CD8-positive, alpha-beta T cell (primary cell): ENCODE measurements at regions of chrX and their contacts with region 1.

Region 1: GRCh38 chrX:19593690-19594089 is 78.4 kb upstream of the MAP3K15 start:
- DNase-seq: peak in 3 of 9 experiments; percentile 14 to 67 (median 48)
- ATAC-seq: peak; percentile 56
- H3K4me3 ChIP-seq: no peak overlapping the region
- H3K4me3 Mint-ChIP-seq: no peak overlapping the region
- H3K27ac ChIP-seq: no peak overlapping the region
- H3K27ac Mint-ChIP-seq: no peak overlapping the region
- H3K4me1 ChIP-seq: no peaks in the 10 kb centered on the region
- H3K4me1 Mint-ChIP-seq: peaks cover 15% of the 10 kb centered on the region
- H3K27me3 ChIP-seq: no peaks in the 10 kb centered on the region
- H3K27me3 Mint-ChIP-seq: no peaks in the 10 kb centered on the region
- CTCF ChIP-seq: no peak

Region 2: GRCh38 chrX:19382555-19383145 is 211.0 kb before region 1 on chrX:
- CTCF ChIA-PET with region 1: no interaction called
- POLR2A ChIA-PET with region 1: no interaction called
- intact Hi-C with region 1: no loop called
- DNase-seq: peak; percentile 7 to 66 (median 47)
- ATAC-seq: peak; percentile 63
- H3K4me3 ChIP-seq: no peak overlapping the region
- H3K4me3 Mint-ChIP-seq: no peak overlapping the region
- H3K27ac ChIP-seq: no peak overlapping the region
- H3K27ac Mint-ChIP-seq: no peak overlapping the region
- H3K4me1 ChIP-seq: no peaks in the 10 kb centered on the region
- H3K4me1 Mint-ChIP-seq: no peaks in the 10 kb centered on the region
- H3K27me3 ChIP-seq: no peaks in the 10 kb centered on the region
- H3K27me3 Mint-ChIP-seq: peaks cover 4% of the 10 kb centered on the region
- CTCF ChIP-seq: peak; percentile 35

Region 3: GRCh38 chrX:19739683-19740082 is 146.0 kb after region 1 on chrX:
- CTCF ChIA-PET with region 1: no interaction called
- POLR2A ChIA-PET with region 1: no interaction called
- intact Hi-C with region 1: loop called in 1 of 2 experiments (anchors 10 kb)
- DNase-seq: peak in 7 of 9 experiments; percentile 10 to 71 (median 54)
- ATAC-seq: peak; percentile 44
- H3K4me3 ChIP-seq: no peak overlapping the region
- H3K4me3 Mint-ChIP-seq: no peak overlapping the region
- H3K27ac ChIP-seq: no peak overlapping the region
- H3K27ac Mint-ChIP-seq: peak overlapping the region; percentile 81
- H3K4me1 ChIP-seq: peaks cover 60% of the 10 kb centered on the region
- H3K4me1 Mint-ChIP-seq: peaks cover 76% of the 10 kb centered on the region
- H3K27me3 ChIP-seq: no peaks in the 10 kb centered on the region
- H3K27me3 Mint-ChIP-seq: no peaks in the 10 kb centered on the region
- CTCF ChIP-seq: peak; percentile 52

Region 4: GRCh38 chrX:20066968-20067708 is 473.4 kb after region 1 on chrX:
- CTCF ChIA-PET with region 1: no interaction called
- POLR2A ChIA-PET with region 1: no interaction called
- intact Hi-C with region 1: loop called in 1 of 2 experiments (anchors 2 kb)
- DNase-seq: peak in 6 of 9 experiments; percentile 0 to 60 (median 16)
- ATAC-seq: peak; percentile 63
- H3K4me3 ChIP-seq: no peak overlapping the region
- H3K4me3 Mint-ChIP-seq: no peak overlapping the region
- H3K27ac ChIP-seq: no peak overlapping the region
- H3K27ac Mint-ChIP-seq: no peak overlapping the region
- H3K4me1 ChIP-seq: no peaks in the 10 kb centered on the region
- H3K4me1 Mint-ChIP-seq: no peaks in the 10 kb centered on the region
- H3K27me3 ChIP-seq: no peaks in the 10 kb centered on the region
- H3K27me3 Mint-ChIP-seq: no peaks in the 10 kb centered on the region
- CTCF ChIP-seq: peak; percentile 31

Region 5: DNA sequence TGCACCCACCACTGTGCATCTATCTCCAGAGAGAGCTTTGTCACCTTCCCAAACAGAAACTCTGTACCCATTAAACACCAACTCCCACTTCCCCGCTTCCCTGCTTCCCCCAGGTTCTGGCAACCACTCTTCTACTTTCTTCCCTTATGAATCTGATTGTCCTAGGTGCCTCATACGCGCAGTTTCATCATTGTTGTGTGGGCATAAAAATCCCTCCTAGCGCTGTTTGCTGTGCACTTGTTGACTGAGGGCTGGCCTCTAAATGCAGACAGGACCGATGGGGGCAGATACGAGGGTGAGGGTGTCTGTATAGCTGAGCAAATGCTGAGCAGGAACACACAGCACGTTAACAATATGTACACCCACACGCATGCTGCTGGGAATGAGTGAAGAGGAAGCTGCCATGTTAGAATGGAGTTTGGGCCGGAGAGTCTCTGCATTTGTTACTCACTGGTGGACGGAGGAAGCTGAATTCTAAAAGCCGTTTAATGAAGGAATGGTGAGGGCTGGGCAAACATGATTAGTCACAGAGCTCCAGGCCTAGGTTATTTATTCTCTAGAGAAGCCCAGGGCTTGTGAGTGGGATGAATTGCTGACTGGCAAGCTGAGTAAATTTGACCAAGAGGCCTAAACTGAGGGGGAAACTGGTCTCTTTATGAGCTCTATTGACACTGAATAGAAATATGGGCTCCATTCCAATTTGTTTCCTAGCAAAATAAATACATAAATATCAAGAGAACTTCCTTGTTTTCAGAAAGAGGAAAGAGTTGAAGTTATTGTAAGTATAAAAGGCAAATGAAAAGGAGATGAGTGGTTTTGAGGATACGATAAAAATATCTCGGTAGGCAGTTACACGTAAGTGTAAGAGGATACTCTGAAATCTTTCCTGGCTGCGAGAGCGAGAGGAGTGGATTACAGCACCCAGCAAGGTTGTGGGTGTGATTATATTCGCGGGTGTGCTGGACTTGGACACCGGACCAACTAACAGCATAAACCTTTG is 768.9 kb after region 1 on chrX:
- CTCF ChIA-PET with region 1: no interaction called
- POLR2A ChIA-PET with region 1: no interaction called
- intact Hi-C with region 1: no loop called
- DNase-seq: no peak
- ATAC-seq: no peak
- H3K4me3 ChIP-seq: no peak overlapping the region
- H3K4me3 Mint-ChIP-seq: no peak overlapping the region
- H3K27ac ChIP-seq: no peak overlapping the region
- H3K27ac Mint-ChIP-seq: no peak overlapping the region
- H3K4me1 ChIP-seq: no peaks in the 10 kb centered on the region
- H3K4me1 Mint-ChIP-seq: no peaks in the 10 kb centered on the region
- H3K27me3 ChIP-seq: no peaks in the 10 kb centered on the region
- H3K27me3 Mint-ChIP-seq: no peaks in the 10 kb centered on the region
- CTCF ChIP-seq: no peak